A673 (cell line): ENCODE measurements at regions of chr3 and their contacts with region 1.

Region 1: GRCh38 chr3:183725387-183725786 is 27.8 kb downstream of the YEATS2 start:
- DNase-seq: peak; percentile 77
- H3K4me3 ChIP-seq: no peak overlapping the region
- H3K27ac ChIP-seq: no peak overlapping the region
- H3K4me1 ChIP-seq: peaks cover 6% of the 10 kb centered on the region
- H3K27me3 ChIP-seq: no peaks in the 10 kb centered on the region
- CTCF ChIP-seq: no peak

Region 2: DNA sequence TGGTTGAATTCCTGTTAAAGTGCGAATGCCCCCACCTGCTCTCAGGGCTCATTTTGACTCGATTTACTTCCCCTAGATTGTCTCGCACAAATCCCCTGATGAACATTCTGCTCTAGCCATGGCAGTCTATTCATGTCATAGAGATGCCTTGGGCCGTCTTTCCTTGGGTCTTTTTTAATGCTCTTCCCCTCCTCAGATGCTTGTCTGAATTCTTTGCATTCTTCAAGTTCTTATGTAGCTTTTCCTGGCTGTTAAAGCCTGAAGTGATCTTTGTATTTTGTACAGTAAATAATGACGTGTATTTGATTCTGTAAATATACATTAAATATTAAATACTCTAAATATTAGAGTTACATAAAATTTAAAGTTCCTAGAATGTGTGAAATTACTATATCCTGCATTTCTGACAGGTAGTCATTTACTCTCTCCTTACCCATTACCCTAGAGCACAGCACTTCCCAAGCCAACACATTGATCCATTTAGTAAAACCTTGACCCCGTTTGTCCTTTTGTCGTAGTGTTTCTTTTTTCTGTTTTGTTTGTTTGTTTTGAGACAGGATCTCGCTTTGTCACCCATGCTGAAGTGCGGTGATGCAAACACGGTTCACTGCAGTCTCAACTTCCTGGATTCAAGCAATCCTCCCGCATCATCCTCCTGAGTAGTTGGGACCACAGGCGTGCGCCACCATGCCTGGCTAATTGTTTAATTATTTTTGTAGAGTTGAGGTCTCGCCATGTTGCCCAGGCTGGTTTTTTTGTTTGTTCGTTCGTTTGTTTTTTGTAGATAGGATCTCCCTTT is 20.1 kb after region 1 on chr3:
- CTCF ChIA-PET with region 1: no interaction called
- POLR2A ChIA-PET with region 1: no interaction called
- intact Hi-C with region 1: loop called (anchors 1 kb)
- DNase-seq: peak; percentile 14
- H3K4me3 ChIP-seq: no peak overlapping the region
- H3K27ac ChIP-seq: no peak overlapping the region
- H3K4me1 ChIP-seq: no peaks in the 10 kb centered on the region
- H3K27me3 ChIP-seq: no peaks in the 10 kb centered on the region
- CTCF ChIP-seq: no peak